Activated CD4-positive, alpha-beta memory T cell treated with anti-CD3 and anti-CD28 coated beads, Interleukin-2, amount 10 ng/mL, durations not matched to agents 7 days and 5 days (primary cell): ENCODE measurements at regions of chr3 and their contacts with region 1.

Region 1: DNA sequence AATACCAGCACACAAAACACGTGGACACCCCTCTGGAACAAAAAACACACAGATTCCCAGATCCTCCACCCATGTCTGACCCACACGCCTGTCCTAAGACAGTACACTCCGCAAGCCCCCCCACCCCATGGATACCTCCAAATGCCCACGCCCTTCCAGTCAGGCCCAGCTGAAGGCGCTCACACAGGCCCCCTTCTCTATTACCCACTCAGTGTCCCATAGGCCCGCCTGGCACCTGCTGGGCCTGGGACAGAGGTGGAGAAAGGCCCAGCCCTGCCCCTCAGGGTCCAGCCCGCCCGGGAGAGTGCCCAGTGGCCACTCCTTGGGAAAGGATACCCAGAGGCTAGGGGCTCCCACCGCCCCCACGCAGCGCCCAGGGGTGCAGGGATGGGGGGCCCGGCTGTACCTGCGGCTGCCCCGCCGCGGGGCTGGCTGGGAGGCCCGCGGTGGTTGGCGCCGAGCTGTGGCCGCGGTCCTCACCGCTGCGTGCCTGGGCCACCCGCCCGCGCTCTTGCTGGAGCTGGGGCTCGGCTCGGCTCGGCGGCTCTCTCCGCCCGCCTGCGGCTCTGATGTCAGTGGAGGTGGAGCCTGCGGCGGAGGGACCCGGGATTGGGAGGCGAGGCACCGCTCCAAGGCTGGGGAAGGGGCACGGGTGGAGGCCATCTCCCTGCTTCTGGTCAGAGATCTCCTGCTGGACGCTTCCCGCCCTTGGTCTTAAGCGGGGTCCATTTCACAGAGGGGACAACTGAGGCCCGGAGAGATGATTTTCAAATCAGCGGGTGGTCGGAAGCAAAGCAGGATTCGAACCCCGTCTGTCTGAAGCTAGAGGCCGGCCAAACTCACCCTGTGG is at the start of gene CAMK1:
- DNase-seq: peak; percentile 77
- H3K4me3 Mint-ChIP-seq: peak within 1 kb of the TSS; percentile 71
- H3K27ac Mint-ChIP-seq: peak within 1 kb of the TSS; percentile 54
- H3K4me1 Mint-ChIP-seq: peaks cover 40% of the 10 kb centered on the region
- H3K27me3 Mint-ChIP-seq: no peaks in the 10 kb centered on the region
- total RNA-seq, gene CAMK1: 18.5 to 20.2 TPM

Region 2: GRCh38 chr3:9158865-9159630 is 610.6 kb before region 1 on chr3:
- CTCF ChIA-PET with region 1: no interaction called
- POLR2A ChIA-PET with region 1: no interaction called
- DNase-seq: no peak
- H3K4me3 Mint-ChIP-seq: no peak overlapping the region
- H3K27ac Mint-ChIP-seq: no peak overlapping the region
- H3K4me1 Mint-ChIP-seq: peaks cover 2% of the 10 kb centered on the region
- H3K27me3 Mint-ChIP-seq: peaks cover 7% of the 10 kb centered on the region

Region 3: GRCh38 chr3:9779721-9780457 is 10.2 kb after region 1 on chr3:
- CTCF ChIA-PET with region 1: interaction called, 4 read pairs
- POLR2A ChIA-PET with region 1: interaction called, 25 read pairs
- DNase-seq: peak; percentile 61
- H3K4me3 Mint-ChIP-seq: peak overlapping the region; percentile 21
- H3K27ac Mint-ChIP-seq: peak overlapping the region; percentile 92
- H3K4me1 Mint-ChIP-seq: peaks cover 54% of the 10 kb centered on the region
- H3K27me3 Mint-ChIP-seq: no peaks in the 10 kb centered on the region

Region 4: DNA sequence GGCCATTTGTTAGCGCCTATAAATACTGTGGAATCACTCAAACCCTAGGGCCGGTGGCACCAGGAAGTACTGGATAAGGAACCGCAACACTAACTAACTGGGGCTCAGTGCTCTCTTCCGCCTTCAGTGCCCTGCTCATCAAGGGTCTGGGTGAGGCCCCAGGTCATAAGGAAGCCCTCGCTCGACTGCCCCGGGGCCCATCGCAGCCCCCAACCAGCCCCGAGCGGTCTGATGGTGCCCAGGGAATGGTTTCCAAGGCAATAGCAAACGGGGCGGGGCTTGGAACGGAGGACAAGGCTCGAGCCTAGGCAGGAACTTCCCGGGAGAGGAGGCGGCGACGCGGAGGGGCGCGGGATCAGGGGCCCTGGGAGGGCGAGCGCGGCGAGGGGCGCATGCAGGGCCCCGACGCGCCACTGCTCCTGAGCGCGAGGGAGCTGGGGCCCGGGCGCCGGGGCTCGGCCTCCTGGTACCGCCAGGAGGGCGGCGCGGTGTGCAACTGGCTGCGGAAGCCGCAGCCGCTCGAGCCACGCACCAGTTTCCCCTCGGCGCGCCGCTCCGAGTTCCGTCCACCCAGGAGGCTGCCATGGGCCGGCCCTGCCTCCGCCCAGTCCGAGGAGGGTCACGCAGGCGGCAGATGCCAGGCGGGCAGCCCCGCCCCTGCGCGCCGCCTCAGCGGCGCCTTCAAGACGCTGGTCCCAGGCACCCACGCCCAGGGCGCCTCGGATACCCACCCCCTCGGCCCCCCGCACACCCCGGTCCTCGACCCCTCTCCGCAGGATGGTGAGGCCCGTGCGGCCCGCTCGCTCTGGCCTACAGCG is 40.2 kb after region 1 on chr3 and contains the start of gene TTLL3:
- CTCF ChIA-PET with region 1: no interaction called
- POLR2A ChIA-PET with region 1: interaction called, 11 read pairs
- DNase-seq: peak; percentile 54
- H3K4me3 Mint-ChIP-seq: peak within 1 kb of the TSS; percentile 86
- H3K27ac Mint-ChIP-seq: peak within 1 kb of the TSS; percentile 93
- H3K4me1 Mint-ChIP-seq: peaks cover 51% of the 10 kb centered on the region
- H3K27me3 Mint-ChIP-seq: no peaks in the 10 kb centered on the region
- total RNA-seq, gene TTLL3: 50.8 to 59.0 TPM